B cell (primary cell): ENCODE measurements at regions of chr11 and their contacts with region 1.

Region 1: GRCh38 chr11:83156150-83156995 is 558 bp upstream of the PCF11 start:
- DNase-seq: peak; percentile 100
- ATAC-seq: peak; percentile 86
- H3K4me3 ChIP-seq: peak overlapping the region; percentile 67 to 95 (median 72)
- H3K4me3 Mint-ChIP-seq: peak overlapping the region; percentile 98
- H3K27ac ChIP-seq: peak overlapping the region; percentile 78 to 86
- H3K27ac Mint-ChIP-seq: peak overlapping the region; percentile 100
- H3K4me1 ChIP-seq: peaks cover 23 to 24% of the 10 kb centered on the region in 2 donors
- H3K4me1 Mint-ChIP-seq: peaks cover 38% of the 10 kb centered on the region
- H3K27me3 ChIP-seq: no peaks in the 10 kb centered on the region
- H3K27me3 Mint-ChIP-seq: no peaks in the 10 kb centered on the region
- CTCF ChIP-seq: no peak

Region 2: DNA sequence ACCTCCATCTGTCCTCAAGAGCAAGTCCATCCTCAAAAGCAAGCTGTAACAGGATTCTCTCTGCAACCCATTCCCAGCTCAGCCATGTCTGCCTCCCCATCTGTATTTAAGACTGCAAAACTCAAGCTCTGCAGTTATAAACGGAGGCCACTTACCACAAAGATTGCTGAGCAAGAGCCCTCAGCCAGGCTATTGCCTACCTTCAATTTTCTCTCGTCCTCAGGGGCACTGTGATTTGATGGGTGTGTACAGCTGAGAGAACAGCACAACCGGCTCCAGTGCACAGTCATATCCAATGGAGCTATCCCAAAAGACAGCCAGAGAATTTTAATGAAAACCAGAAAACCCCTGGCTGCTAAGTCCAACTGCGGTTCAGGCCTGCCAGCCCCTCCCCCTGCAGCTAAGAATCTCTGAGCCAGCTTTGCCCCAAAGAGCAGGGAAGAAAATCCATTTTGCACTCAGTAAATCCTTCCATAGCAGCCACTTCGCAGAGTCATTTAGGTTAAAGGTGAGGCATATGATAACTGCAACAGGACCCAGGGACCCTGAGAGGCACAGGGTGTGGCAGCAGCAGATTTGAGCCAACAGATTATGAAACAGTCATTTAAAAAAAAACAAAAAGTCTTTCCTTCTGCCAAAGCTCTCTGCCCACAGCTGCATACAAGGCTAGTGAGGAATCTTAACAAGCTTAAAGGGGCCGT is 122.3 kb before region 1 on chr11:
- CTCF ChIA-PET with region 1: no interaction called
- POLR2A ChIA-PET with region 1: interaction called, 12 read pairs
- intact Hi-C with region 1: no loop called
- DNase-seq: no peak
- ATAC-seq: no peak
- H3K4me3 ChIP-seq: peak overlapping the region in 1 of 5 experiments; percentile 14
- H3K4me3 Mint-ChIP-seq: peak overlapping the region; percentile 88
- H3K27ac ChIP-seq: peak overlapping the region in 1 of 2 donors; percentile 96
- H3K27ac Mint-ChIP-seq: peak overlapping the region; percentile 88
- H3K4me1 ChIP-seq: peaks cover 56% of the 10 kb centered on the region in 2 donors
- H3K4me1 Mint-ChIP-seq: peaks cover 71% of the 10 kb centered on the region
- H3K27me3 ChIP-seq: no peaks in the 10 kb centered on the region
- H3K27me3 Mint-ChIP-seq: no peaks in the 10 kb centered on the region
- CTCF ChIP-seq: no peak

Region 3: DNA sequence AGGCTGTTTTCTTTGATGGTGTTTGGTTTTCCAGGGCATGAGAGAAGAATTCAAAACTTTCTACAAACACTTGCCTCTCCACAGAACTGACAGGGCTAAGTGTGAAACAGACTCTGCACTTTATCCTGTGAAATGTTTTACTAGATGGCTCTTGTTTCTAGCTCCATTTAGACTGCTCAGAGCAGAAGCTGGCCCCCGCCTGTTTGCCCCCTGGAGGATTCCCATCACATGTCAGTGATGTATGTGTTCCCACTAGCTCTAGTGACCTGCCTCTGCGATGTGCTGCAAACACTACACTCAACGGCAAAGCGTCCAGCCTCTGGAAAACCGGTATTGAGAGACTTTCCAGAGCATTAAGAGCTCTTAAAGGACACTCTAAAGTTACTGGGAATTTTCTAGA is 40.8 kb before region 1 on chr11:
- CTCF ChIA-PET with region 1: interaction called, 4 read pairs
- POLR2A ChIA-PET with region 1: interaction called, 5 read pairs
- intact Hi-C with region 1: loop called (anchors 2 kb)
- DNase-seq: no peak
- ATAC-seq: no peak
- H3K4me3 ChIP-seq: peak overlapping the region in 2 of 5 experiments; percentile 69 to 71
- H3K4me3 Mint-ChIP-seq: peak overlapping the region; percentile 75
- H3K27ac ChIP-seq: no peak overlapping the region
- H3K27ac Mint-ChIP-seq: peak overlapping the region; percentile 8
- H3K4me1 ChIP-seq: peaks cover 35 to 36% of the 10 kb centered on the region in 2 donors
- H3K4me1 Mint-ChIP-seq: peaks cover 44% of the 10 kb centered on the region
- H3K27me3 ChIP-seq: no peaks in the 10 kb centered on the region
- H3K27me3 Mint-ChIP-seq: no peaks in the 10 kb centered on the region
- CTCF ChIP-seq: no peak

Region 4: DNA sequence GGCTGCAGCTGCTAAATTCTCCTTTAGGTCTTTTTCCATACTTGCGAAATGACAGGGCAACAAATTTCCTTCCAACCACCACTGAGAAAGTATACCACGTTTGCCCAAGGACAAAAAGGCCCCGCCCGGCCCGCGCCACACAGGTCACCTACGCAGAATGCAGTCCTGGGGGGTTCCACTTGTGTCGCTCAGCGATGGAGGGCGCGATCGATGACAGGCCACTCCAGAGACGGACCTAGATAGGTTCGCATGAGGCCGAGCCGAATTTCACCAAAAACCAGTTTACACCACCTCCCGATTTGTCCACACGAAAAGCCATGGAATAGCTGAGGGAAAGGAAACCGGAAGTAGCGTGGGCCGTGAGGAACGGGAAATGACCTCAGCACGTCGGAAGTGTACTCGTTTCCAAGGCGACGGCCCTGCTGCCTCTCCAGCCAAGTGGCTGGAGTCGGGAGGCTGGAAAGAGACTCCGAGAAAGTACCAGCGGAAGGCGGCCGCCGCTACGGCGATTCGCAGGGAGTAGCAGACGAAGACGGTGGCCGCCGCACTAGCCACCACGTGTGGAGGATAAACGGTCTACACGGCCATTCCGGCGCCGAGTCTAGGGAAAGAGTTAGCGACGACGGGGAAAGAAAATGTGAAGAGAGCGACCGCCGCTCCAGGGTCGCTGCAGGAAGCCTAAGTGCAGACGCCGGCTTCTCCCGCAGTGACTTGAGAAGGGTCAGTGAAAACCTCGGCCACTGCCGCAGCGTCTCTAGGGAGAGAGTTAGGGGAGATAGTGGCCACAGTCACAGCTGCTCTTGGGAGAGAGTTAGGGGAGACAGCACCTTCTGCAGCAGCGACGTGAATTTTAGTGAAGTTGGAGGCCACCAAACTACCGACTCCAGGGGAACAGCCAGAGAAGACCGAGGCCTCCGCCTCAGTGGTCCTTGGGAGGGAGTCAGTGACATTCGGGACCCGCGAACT is 37.2 kb after region 1 on chr11 and contains the start of gene ANKRD42:
- CTCF ChIA-PET with region 1: no interaction called
- POLR2A ChIA-PET with region 1: interaction called, 6 read pairs
- intact Hi-C with region 1: loop called (anchors 1 kb)
- DNase-seq: peak; percentile 95
- ATAC-seq: peak; percentile 72
- H3K4me3 ChIP-seq: peak within 1 kb of the TSS; percentile 58 to 99 (median 96)
- H3K4me3 Mint-ChIP-seq: peak within 1 kb of the TSS; percentile 98
- H3K27ac ChIP-seq: peak within 1 kb of the TSS; percentile 93 to 96
- H3K27ac Mint-ChIP-seq: peak within 1 kb of the TSS; percentile 97
- H3K4me1 ChIP-seq: peaks cover 22 to 29% of the 10 kb centered on the region in 2 donors
- H3K4me1 Mint-ChIP-seq: peaks cover 49% of the 10 kb centered on the region
- H3K27me3 ChIP-seq: no peaks in the 10 kb centered on the region
- H3K27me3 Mint-ChIP-seq: no peaks in the 10 kb centered on the region
- CTCF ChIP-seq: no peak
- total RNA-seq, gene ANKRD42: 13.3 and 14.5 TPM in 2 replicates